B cell (primary cell): ENCODE measurements at regions of chr2 and their contacts with region 1.

Region 1: DNA sequence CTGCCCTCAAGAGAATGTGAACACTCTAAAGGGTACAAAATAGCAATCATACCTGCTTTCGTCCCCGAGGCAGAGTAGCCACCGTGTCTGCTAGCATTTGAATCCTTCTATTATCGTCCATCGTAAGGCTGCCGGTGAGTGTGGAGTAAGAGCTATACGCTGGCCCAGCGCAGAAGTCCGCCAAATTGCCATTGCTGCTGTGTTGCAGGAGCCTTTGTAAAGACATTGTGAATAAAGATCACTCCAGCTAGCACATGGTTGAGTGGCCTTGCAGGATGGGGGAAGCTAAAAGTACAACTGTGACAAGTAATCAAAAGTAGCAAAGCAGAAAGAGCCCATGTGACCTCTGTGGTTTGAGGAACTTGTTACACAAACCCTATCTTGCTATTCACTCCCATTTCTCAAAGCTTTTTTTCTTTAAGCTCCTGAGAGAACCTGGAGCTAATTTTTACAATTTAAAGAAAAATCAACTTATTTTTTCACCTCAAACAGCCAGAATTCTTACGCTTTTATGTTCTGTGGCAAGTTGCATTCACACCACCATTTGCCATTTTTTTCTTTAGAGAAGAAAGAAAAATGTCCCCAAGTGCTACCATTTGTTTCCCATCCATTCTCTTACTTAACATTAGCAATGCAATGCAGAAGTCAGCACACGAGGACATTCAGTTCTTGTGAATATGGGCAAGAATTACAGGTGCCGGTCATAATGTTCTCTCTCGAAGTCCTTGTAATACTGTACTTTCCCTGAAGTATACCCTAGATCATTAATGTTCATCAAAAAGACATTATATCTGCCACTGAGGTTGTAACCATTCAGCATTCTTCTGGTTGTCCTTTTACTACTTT is at the start of gene CYTIP:
- DNase-seq: peak; percentile 88
- ATAC-seq: peak; percentile 58
- H3K4me3 ChIP-seq: peak within 1 kb of the TSS; percentile 82 to 98 (median 92)
- H3K4me3 Mint-ChIP-seq: peak within 1 kb of the TSS; percentile 94
- H3K27ac ChIP-seq: peak within 1 kb of the TSS; percentile 93 to 96
- H3K27ac Mint-ChIP-seq: peak within 1 kb of the TSS; percentile 95
- H3K4me1 ChIP-seq: peaks cover 40 to 43% of the 10 kb centered on the region in 2 donors
- H3K4me1 Mint-ChIP-seq: peaks cover 39% of the 10 kb centered on the region
- H3K27me3 ChIP-seq: no peaks in the 10 kb centered on the region
- H3K27me3 Mint-ChIP-seq: no peaks in the 10 kb centered on the region
- CTCF ChIP-seq: no peak
- total RNA-seq, gene CYTIP: 327 and 358 TPM in 2 replicates

Region 2: GRCh38 chr2:156341452-156342253 is 1102.4 kb before region 1 on chr2:
- CTCF ChIA-PET with region 1: interaction called, 3 read pairs
- POLR2A ChIA-PET with region 1: interaction called, 3 read pairs
- intact Hi-C with region 1: loop called (anchors 5 kb)
- DNase-seq: peak; percentile 94
- ATAC-seq: peak; percentile 73
- H3K4me3 ChIP-seq: peak overlapping the region; percentile 81 to 96 (median 84)
- H3K4me3 Mint-ChIP-seq: peak overlapping the region; percentile 93
- H3K27ac ChIP-seq: peak overlapping the region; percentile 99 to 100
- H3K27ac Mint-ChIP-seq: peak overlapping the region; percentile 99
- H3K4me1 ChIP-seq: peaks cover 13 to 14% of the 10 kb centered on the region in 2 donors
- H3K4me1 Mint-ChIP-seq: peaks cover 25% of the 10 kb centered on the region
- H3K27me3 ChIP-seq: no peaks in the 10 kb centered on the region
- H3K27me3 Mint-ChIP-seq: no peaks in the 10 kb centered on the region
- CTCF ChIP-seq: no peak

Region 3: DNA sequence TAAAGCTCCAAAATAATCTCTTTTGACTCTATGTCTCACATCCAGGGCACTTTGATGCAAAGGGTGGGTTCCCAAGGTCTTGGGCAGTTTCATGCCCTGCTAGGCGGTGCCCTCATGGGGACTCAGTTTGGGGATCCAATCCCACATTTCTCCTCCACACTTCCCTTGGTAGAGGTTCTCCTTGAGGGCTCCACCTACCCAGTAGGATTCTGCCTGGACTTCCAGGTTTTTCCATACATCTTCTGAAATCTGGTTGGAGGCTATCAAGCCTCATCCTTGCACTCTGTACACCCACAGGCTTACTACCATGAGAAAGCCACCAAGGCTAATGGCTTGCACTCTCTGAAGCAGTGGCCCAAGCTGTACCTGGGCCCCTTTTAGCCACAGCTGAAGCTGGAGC is 68.6 kb before region 1 on chr2:
- CTCF ChIA-PET with region 1: no interaction called
- POLR2A ChIA-PET with region 1: no interaction called
- intact Hi-C with region 1: no loop called
- DNase-seq: no peak
- ATAC-seq: no peak
- H3K4me3 ChIP-seq: no peak overlapping the region
- H3K4me3 Mint-ChIP-seq: no peak overlapping the region
- H3K27ac ChIP-seq: no peak overlapping the region
- H3K27ac Mint-ChIP-seq: no peak overlapping the region
- H3K4me1 ChIP-seq: peaks cover 0 to 3% of the 10 kb centered on the region in 2 donors
- H3K4me1 Mint-ChIP-seq: peaks cover 4% of the 10 kb centered on the region
- H3K27me3 ChIP-seq: no peaks in the 10 kb centered on the region
- H3K27me3 Mint-ChIP-seq: no peaks in the 10 kb centered on the region
- CTCF ChIP-seq: no peak

Region 4: DNA sequence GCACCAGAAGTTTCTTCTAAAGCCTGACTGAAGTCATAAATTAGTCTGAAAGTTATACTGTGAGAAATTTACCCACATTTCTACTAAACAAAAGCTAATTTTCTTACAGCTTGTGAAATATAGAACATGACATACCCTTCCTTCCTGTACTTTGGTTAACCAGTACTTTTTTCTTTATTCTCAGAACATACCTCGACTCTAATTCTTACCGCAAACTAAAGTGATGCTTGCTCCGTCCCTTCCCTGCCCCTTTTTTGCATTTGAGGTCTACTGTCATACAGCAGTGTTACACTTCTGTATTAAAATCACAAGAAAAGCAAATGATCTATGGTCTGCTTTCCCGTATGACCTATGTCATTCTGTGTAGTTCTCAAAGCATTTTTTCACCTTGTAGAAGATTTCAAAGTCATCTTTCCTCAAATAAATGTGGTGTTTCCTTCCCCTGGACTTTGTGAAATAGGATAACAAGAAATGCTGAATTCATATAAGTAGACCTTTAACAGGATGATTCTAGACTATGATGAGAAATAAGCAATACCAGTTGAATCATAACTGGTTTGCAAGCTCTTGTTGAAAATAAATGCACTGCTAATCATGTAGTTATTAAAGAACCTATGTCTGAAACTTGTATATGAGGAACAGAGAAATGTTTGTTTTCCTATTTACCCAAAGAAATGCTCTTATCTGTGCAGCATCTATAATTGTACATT is 30.5 kb before region 1 on chr2:
- CTCF ChIA-PET with region 1: interaction called, 9 read pairs
- POLR2A ChIA-PET with region 1: interaction called, 11 read pairs
- intact Hi-C with region 1: loop called (anchors 2 kb)
- DNase-seq: peak; percentile 73
- ATAC-seq: peak; percentile 58
- H3K4me3 ChIP-seq: peak overlapping the region in 1 of 5 experiments; percentile 31
- H3K4me3 Mint-ChIP-seq: peak overlapping the region; percentile 60
- H3K27ac ChIP-seq: peak overlapping the region; percentile 34 to 69
- H3K27ac Mint-ChIP-seq: peak overlapping the region; percentile 82
- H3K4me1 ChIP-seq: peaks cover 53 to 61% of the 10 kb centered on the region in 2 donors
- H3K4me1 Mint-ChIP-seq: peaks cover 77% of the 10 kb centered on the region
- H3K27me3 ChIP-seq: no peaks in the 10 kb centered on the region
- H3K27me3 Mint-ChIP-seq: no peaks in the 10 kb centered on the region
- CTCF ChIP-seq: no peak

Region 5: DNA sequence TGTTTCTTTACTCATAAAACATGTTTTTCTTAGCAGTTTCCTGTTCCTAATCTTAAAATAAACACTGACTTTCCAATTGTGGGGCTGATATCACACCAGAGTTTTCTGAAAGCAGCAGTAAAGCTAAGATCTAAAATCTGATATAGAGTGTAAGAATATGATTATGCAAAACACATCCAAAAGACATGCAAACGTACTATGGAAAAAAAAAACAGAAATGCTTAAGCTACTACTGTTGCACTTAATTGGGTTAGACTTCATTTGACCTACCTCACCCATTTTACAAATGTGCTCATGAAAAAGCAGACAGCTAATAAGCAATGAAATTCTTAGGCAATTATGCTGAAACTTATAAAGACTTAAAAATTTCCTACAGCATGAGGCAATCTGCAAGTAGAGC is 10.6 kb before region 1 on chr2:
- CTCF ChIA-PET with region 1: interaction called, 10 read pairs
- POLR2A ChIA-PET with region 1: interaction called, 4 read pairs
- intact Hi-C with region 1: no loop called
- DNase-seq: no peak
- ATAC-seq: no peak
- H3K4me3 ChIP-seq: no peak overlapping the region
- H3K4me3 Mint-ChIP-seq: peak overlapping the region; percentile 68
- H3K27ac ChIP-seq: peak overlapping the region in 1 of 2 donors; percentile 34
- H3K27ac Mint-ChIP-seq: peak overlapping the region; percentile 39
- H3K4me1 ChIP-seq: peaks cover 65 to 73% of the 10 kb centered on the region in 2 donors
- H3K4me1 Mint-ChIP-seq: peaks cover 82% of the 10 kb centered on the region
- H3K27me3 ChIP-seq: no peaks in the 10 kb centered on the region
- H3K27me3 Mint-ChIP-seq: no peaks in the 10 kb centered on the region
- CTCF ChIP-seq: no peak

Region 6: GRCh38 chr2:157468931-157469708 is 25.1 kb after region 1 on chr2:
- CTCF ChIA-PET with region 1: interaction called, 10 read pairs
- POLR2A ChIA-PET with region 1: interaction called, 41 read pairs
- intact Hi-C with region 1: loop called (anchors 1 kb)
- DNase-seq: peak; percentile 91
- ATAC-seq: peak; percentile 80
- H3K4me3 ChIP-seq: peak overlapping the region; percentile 38 to 89 (median 55)
- H3K4me3 Mint-ChIP-seq: peak overlapping the region; percentile 87
- H3K27ac ChIP-seq: peak overlapping the region; percentile 96 to 99
- H3K27ac Mint-ChIP-seq: peak overlapping the region; percentile 99
- H3K4me1 ChIP-seq: peaks cover 61 to 68% of the 10 kb centered on the region in 2 donors
- H3K4me1 Mint-ChIP-seq: peaks cover 76% of the 10 kb centered on the region
- H3K27me3 ChIP-seq: no peaks in the 10 kb centered on the region
- H3K27me3 Mint-ChIP-seq: no peaks in the 10 kb centered on the region
- CTCF ChIP-seq: no peak